ENCODE measurements at regions of chr11 and their contacts with region 1.

Region 1: GRCh38 chr11:64887757-64888405 is 9.5 kb upstream of the EHD1 start:
- DNase-seq: peak; percentile 83
- H3K4me3 Mint-ChIP-seq: peak overlapping the region; percentile 77
- H3K27ac Mint-ChIP-seq: peak overlapping the region; percentile 89
- H3K4me1 Mint-ChIP-seq: peaks cover 27% of the 10 kb centered on the region
- H3K27me3 Mint-ChIP-seq: no peaks in the 10 kb centered on the region

Region 2: GRCh38 chr11:64864473-64865285 is 23.2 kb before region 1 on chr11:
- intact Hi-C with region 1: loop called (anchors 1 kb)
- DNase-seq: no peak
- H3K4me3 Mint-ChIP-seq: peak overlapping the region; percentile 70
- H3K27ac Mint-ChIP-seq: peak overlapping the region; percentile 98
- H3K4me1 Mint-ChIP-seq: peaks cover 78% of the 10 kb centered on the region
- H3K27me3 Mint-ChIP-seq: no peaks in the 10 kb centered on the region

Region 3: DNA sequence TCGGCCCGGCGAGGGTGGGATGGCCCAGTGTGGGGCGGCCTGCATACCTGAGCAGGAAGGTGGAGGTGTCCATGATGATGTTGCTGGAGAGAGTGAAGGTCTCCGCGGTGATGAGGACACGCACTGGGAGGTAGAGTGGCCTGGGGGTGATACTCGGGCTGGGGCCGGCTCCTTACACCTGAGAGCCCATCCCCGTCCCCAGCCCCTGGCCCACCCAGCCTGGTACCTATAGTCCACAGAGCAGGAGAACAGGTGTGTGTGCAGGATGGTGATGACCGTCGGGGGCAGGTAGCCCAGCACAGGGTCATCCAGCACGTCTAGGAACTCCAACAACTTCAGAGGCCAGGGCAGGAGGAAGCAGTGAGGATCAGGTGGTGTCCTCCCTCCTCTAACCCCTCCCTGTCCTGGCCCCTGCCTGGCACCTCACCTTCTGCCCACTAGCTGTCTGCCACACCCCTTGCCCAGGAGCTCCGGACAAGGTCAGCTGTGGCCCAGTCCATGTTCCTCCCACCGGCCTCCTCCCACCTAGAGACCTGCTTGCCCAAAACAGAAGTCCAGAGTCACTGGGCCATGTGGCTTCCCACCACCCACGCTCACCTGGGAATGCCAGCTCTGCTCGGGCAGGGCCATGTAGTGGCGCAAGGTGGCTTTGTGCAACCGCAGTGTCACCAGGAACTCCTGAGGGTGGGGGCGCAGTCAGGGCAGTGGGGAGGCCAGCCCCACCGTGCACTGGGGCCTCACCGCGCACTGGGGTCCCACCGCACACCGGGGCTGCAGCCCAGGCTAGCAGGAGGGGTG is 17.8 kb after region 1 on chr11:
- intact Hi-C with region 1: no loop called
- DNase-seq: no peak
- H3K4me3 Mint-ChIP-seq: no peak overlapping the region
- H3K27ac Mint-ChIP-seq: no peak overlapping the region
- H3K4me1 Mint-ChIP-seq: no peaks in the 10 kb centered on the region
- H3K27me3 Mint-ChIP-seq: no peaks in the 10 kb centered on the region

Region 4: DNA sequence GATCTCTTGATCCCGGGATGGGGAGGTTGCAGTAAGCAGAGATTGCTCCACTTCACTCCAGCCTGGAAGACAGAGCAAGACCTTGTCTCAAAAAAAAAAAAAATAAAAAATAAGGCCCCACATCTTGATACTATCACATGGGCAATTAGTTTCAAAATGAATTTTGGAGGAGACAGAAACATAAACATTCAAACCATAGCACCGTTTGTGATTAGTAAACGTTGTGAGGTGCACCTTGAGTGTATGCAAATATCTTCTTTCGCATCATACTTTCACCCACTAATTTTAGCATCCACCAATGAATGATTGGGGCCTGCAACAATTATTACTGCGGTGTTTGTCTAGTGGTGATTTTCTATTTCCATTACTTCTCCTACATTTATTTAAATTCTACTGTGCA is 271.1 kb after region 1 on chr11:
- intact Hi-C with region 1: no loop called
- DNase-seq: no peak
- H3K4me3 Mint-ChIP-seq: no peak overlapping the region
- H3K27ac Mint-ChIP-seq: no peak overlapping the region
- H3K4me1 Mint-ChIP-seq: no peaks in the 10 kb centered on the region
- H3K27me3 Mint-ChIP-seq: peaks cover 8% of the 10 kb centered on the region

Measured in activated T-helper 2 cell treated with anti-CD3 and anti-CD28 coated beads, Interferon-gamma antibody, Interleukin-2, Interleukin-4, amounts not matched to agents 10 μg/mL and 5 μg/mL and 100 μg/mL, durations not matched to agents 14 hours and 24 hours and 36 hours (primary cell).